ENCODE measurements at regions of chr17 and their contacts with region 1.

Region 1: DNA sequence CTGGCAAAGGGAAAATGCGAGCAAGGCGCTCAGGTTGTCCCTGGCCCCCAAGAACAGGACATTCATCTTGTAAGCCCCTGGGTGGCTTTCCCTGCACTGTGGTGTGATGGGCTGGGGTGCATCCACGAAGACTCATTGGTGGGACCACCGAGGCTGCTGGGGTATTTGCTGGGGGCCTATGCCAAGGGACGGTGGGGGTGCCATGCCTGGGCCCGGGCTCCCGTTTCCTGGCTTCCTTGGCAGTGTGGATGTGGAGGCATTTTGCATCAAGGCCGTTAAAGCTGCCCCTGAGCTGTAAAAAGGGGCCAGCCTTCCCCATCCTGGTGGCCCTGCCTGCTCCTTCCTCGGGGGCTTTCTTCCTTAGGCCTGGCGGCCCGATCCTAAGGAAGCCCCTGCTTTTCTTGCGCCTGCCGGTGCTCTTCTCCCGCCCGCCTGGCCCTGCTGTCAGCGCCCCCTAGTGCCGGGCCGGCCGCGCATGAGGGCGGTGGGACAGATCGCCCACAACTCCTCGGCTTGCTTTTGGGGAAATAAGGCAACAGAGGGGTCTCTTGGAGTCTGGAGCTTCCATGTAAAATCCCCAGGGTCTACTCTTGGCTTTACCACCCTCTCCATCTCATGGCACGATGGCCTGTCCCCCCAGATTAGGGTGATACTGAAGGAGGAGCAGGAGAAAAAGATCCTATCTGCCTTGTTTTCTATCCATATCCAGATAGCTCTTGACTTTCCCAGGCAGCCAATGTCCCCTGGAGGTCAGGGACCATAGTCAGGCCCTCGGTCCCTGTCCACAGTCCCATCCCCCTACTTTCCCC is 9.8 kb upstream of the TBX2 start:
- DNase-seq: peak in 2 of 3 donors; percentile 85 to 86
- ATAC-seq: peak; percentile 46 to 72
- H3K4me3 ChIP-seq: no peak overlapping the region
- H3K27ac ChIP-seq: no peak overlapping the region
- H3K4me1 ChIP-seq: no peaks in the 10 kb centered on the region
- H3K27me3 ChIP-seq: no peaks in the 10 kb centered on the region

Region 2: GRCh38 chr17:60720763-60721531 is 668.9 kb before region 1 on chr17:
- intact Hi-C with region 1: loop called in 3 of 4 experiments (anchors 10 kb)
- DNase-seq: no peak
- ATAC-seq: peak in 1 of 2 donors; percentile 39
- H3K4me3 ChIP-seq: no peak overlapping the region
- H3K27ac ChIP-seq: no peak overlapping the region
- H3K4me1 ChIP-seq: no peaks in the 10 kb centered on the region
- H3K27me3 ChIP-seq: no peaks in the 10 kb centered on the region

Region 3: GRCh38 chr17:60993497-60993896 is 396.4 kb before region 1 on chr17:
- intact Hi-C with region 1: loop called in 1 of 4 experiments (anchors 10 kb)
- DNase-seq: no peak
- ATAC-seq: no peak
- H3K4me3 ChIP-seq: no peak overlapping the region
- H3K27ac ChIP-seq: no peak overlapping the region
- H3K4me1 ChIP-seq: no peaks in the 10 kb centered on the region
- H3K27me3 ChIP-seq: no peaks in the 10 kb centered on the region

Region 4: DNA sequence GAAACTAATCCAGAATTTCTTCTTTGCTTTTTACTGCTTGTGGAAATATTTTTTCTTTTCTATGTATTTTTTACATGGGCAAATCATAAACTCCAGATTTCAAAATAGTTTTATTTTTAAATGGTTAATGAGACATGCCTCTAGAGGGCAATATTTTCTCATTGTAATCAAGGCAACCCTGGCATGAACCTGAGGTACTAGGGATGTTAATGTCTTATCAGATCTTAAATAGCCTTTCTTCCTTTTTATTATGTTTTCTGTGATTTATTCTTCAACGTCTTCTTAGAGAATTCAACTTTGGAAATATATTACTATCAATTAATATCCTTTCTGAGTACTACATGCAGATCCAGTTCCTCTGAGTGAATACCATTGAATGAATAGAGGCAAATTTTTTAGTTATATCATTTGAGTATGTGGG is 387.5 kb before region 1 on chr17:
- intact Hi-C with region 1: loop called (anchors 5 to 10 kb)
- DNase-seq: no peak
- ATAC-seq: no peak
- H3K4me3 ChIP-seq: no peak overlapping the region
- H3K27ac ChIP-seq: no peak overlapping the region
- H3K4me1 ChIP-seq: no peaks in the 10 kb centered on the region
- H3K27me3 ChIP-seq: no peaks in the 10 kb centered on the region

Region 5: DNA sequence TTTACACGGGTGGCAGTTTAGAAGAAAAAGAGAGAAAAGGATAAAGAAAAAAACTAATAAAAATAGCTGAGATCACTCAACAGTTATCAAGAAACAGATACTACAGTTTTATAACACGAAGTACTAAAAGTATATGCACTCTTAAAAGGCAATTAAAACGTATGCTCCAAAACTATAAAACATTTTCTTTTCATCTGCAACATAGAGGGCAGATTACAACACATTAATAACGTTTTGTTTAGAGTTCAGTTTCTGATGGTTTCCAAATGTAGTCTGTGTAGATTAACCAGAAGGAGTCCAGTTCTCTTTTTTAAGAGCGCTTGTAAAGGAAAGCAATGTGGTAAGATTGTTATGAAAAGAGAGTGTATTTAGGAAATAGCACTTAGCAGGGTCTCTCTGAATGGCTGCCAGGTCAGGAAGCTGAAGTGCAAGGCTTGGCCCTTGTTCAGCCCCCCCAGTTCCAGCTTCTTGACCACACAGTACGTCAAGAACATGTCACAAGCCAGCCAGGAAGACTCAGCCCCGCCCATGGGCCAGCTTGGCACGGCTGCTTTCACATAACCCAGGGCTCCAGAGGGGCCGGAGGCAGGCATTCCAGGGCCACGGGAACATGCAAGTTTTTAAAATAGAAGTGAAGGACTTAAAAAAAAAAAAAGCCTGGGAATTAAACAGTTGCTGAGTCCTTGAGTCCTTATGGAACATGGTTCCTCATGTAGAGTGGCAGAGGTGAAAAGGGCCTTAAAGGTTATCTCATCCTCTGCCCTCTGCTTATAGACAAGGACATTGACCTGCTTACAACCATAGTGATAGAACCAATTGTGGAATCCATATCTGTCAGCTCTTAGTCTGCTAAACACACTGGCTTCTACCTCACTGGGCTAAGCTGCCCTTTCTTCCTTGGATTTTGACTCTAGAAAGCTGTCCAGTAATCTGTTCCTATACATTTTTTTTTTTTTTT is 137.7 kb before region 1 on chr17:
- intact Hi-C with region 1: loop called in 1 of 4 experiments (anchors 10 kb)
- DNase-seq: peak; percentile 96 to 98 (median 97)
- ATAC-seq: peak; percentile 98
- H3K4me3 ChIP-seq: no peak overlapping the region
- H3K27ac ChIP-seq: peak overlapping the region; percentile 83
- H3K4me1 ChIP-seq: peaks cover 7% of the 10 kb centered on the region
- H3K27me3 ChIP-seq: no peaks in the 10 kb centered on the region

Region 6: DNA sequence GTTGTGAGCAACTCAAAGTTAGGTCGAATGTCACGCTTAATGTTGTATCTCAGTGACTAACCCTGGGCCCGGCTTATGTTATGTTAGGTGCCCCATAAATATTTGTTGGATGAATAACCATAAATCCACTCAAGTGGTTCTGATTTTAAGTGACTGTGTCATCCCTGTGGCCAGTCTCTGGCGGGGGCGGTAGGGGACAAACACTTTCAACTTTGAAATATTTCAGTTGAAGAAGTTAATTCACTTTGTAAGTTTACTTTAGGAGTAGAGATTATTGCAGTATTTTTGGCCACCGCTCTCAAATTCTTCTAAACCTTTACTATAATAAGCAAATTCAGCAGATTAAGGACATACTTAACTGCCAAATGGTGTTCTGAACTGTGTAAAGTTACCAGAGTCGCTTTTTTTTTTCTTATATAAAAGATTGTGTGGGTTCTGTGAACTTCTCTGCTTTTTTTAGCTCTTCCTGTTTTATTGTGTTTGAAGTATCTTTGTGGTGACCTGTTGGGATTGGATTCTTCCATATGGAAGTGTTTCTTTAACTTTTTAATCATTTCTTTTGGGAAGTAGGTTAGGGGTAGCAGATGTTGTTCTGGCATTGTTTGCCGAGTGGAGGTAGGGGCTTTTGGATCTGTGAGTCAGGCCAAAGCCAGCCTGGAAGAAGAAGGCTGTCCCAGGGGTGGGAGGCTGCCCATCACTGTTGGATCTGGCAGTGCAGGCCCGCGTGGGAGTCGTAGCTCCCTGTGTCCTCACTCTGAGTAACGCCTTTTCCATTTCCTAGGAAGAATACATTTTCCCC is 51.7 kb before region 1 on chr17:
- intact Hi-C with region 1: no loop called
- DNase-seq: peak; percentile 41 to 65 (median 62)
- ATAC-seq: peak in 1 of 2 donors; percentile 61
- H3K4me3 ChIP-seq: no peak overlapping the region
- H3K27ac ChIP-seq: peak overlapping the region; percentile 62
- H3K4me1 ChIP-seq: peaks cover 9% of the 10 kb centered on the region
- H3K27me3 ChIP-seq: no peaks in the 10 kb centered on the region

Measured in right cardiac atrium (tissue), 5 donors.